ENCODE measurements at regions of chr6 and their contacts with region 1.

Region 1: DNA sequence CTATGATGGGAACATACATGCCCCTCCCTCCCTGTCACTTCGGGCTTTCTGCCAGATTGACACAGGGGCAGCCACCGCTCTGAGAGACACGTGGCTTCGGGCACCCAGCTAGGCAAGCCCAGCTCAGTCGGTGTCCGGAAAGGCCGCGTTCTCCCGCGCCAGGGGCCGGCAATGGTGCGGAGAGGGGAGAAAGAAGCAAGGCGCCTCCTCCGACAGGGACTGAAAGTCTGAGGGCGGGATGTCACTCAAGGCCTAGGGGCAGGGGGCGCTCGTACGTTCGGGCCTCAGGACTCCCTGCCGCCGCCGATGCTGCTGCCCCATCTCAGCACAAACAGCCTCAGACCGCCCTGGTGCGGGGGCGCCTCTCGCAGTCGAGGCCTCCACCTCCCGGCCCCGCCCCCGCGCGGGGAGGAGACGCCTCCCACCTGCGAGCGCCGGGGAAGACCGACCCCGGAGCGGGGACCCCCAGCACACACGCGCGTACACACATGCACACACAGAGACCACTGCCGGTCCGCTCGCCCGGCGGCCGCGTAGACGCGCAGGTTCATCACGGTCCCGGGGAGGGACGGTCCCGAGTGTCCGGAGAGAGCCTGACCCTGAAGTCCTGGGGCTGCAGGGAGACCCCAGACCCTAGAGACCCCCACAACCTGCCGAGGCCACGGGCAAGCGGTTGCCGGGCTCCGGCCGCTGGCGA is 1.9 kb downstream of the GRM4 start:
- DNase-seq: peak; percentile 24
- ATAC-seq: peak; percentile 68
- H3K4me3 ChIP-seq: no peak overlapping the region; a peak in 1 of 6 replicates
- H3K27ac ChIP-seq: no peak overlapping the region
- H3K4me1 ChIP-seq: peaks cover 7% of the 10 kb centered on the region; the same call in 1 of the 2 replicates
- H3K27me3 ChIP-seq: peaks cover 20 to 97% of the 10 kb centered on the region in 2 experiments; a peak in 4 of 5 replicates
- CTCF ChIP-seq: peak; percentile 51
- EP300 ChIP-seq: no peak
- POLR2A ChIP-seq: no peak
- RAD21 ChIP-seq: no peak

Region 2: GRCh38 chr6:34055223-34055933 is 88.7 kb before region 1 on chr6:
- CTCF ChIA-PET with region 1: no interaction called
- POLR2A ChIA-PET with region 1: no interaction called
- in situ Hi-C with region 1: loop called (anchors 5 kb)
- intact Hi-C with region 1: no loop called
- DNase-seq: peak; percentile 60
- ATAC-seq: peak; percentile 88
- H3K4me3 ChIP-seq: no peak overlapping the region
- H3K27ac ChIP-seq: no peak overlapping the region
- H3K4me1 ChIP-seq: no peaks in the 10 kb centered on the region
- H3K27me3 ChIP-seq: peaks cover 14 to 66% of the 10 kb centered on the region in 2 experiments
- CTCF ChIP-seq: peak; percentile 94
- EP300 ChIP-seq: no peak
- POLR2A ChIP-seq: no peak
- RAD21 ChIP-seq: peak; percentile 73

Region 3: DNA sequence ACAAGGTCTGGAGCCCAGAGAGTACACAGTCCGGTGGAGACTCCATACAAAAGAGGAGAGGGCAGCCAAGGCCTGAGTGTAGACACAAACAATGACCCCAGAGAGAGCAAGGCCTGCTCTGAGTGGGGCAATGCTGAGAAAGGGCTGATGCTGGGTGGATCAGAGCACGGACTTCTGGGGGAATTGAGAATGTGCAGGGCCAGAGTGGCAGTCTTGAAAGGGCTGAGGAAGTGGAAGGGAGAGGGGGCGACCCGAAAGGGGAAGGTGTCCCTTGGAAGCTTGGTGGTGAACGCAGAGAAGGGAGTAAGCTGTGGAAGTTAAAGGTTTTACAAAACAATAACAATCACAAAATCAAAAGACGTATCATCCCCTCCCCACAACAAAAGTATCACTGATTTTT is 13.8 kb after region 1 on chr6:
- CTCF ChIA-PET with region 1: no interaction called
- POLR2A ChIA-PET with region 1: no interaction called
- in situ Hi-C with region 1: no loop called
- intact Hi-C with region 1: no loop called
- DNase-seq: no peak
- ATAC-seq: no peak
- H3K4me3 ChIP-seq: no peak overlapping the region
- H3K27ac ChIP-seq: no peak overlapping the region
- H3K4me1 ChIP-seq: no peaks in the 10 kb centered on the region; the same call in 1 of the 2 replicates
- H3K27me3 ChIP-seq: peaks cover 3 to 31% of the 10 kb centered on the region in 2 experiments
- CTCF ChIP-seq: no peak
- EP300 ChIP-seq: no peak
- POLR2A ChIP-seq: no peak
- RAD21 ChIP-seq: no peak

Region 4: DNA sequence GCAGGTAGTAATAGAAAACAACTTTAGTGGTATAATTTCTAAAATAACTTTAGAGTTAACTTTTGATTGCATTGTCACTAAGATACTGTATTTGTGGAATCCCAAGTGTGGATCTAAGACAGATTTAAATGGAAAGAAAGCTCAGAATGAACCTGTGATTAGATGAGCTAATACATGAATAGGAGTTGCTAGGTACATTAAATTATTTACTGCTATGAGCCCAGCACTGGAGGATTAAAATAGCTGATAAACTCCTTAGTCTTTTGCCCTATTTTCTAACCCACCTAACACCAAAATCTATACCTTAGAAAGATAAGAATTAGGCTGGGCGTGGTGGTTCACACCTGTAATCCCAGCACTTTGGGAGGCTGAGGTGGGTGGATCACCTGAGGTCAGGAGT is 624.1 kb after region 1 on chr6:
- CTCF ChIA-PET with region 1: no interaction called
- POLR2A ChIA-PET with region 1: no interaction called
- in situ Hi-C with region 1: no loop called
- intact Hi-C with region 1: no loop called
- DNase-seq: no peak
- ATAC-seq: no peak
- H3K4me3 ChIP-seq: no peak overlapping the region
- H3K27ac ChIP-seq: no peak overlapping the region
- H3K4me1 ChIP-seq: no peaks in the 10 kb centered on the region
- H3K27me3 ChIP-seq: no peaks in the 10 kb centered on the region
- CTCF ChIP-seq: no peak
- EP300 ChIP-seq: no peak
- POLR2A ChIP-seq: no peak
- RAD21 ChIP-seq: no peak